Body of pancreas (tissue), 4 donors: ENCODE measurements at regions of chr16 and their contacts with region 1.

Region 1: DNA sequence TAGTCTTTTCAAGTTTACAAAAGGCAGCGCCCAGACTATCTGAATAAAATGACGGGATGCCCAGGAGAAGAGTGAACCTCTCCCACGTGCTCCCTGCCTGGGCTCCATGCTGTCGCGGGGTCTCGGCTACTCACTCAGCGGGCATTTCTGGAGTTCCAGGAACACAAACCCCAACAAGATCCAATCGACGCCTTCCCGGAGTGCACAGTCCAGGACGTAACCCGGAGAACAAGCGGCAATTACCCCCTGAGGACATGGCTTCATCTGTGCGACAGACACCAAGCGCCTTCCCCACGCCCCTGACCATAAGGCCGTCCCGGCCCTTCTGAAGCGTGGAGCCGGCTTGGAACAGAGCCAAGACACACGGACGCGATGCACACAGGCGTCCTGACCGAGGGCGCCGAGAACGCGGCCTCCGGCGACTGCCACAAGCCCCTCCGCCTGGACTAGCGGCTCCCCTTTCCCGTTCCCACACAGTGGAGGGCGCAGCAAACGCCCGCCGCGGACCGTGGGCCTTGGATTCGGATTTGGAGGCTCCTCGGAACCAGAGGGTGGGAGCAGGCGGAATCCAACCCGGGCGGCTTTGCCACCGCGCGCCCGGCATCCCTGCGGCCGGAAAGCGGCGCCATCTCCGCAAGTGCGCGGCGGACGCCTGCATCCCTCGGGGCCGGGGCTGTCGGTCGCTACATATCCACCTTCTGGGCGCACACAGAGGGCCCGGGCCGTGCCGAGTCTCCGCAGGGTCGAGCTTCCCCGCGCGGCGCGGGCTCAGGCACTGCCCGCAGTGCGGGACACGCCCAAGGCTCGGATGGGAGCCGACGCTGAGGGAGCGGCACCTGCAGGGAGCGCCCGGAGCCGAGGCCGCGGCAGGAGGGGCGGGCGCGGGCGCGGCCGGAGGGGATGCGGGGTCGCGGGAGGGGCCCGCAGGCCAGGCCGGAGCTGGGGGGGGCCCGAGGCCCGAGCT is 725 bp downstream of the ABCA3 start:
- DNase-seq: peak; percentile 57 to 74 (median 67)
- ATAC-seq: peak; percentile 47
- H3K4me3 ChIP-seq: peak overlapping the region in 1 of 2 donors; percentile 81
- H3K27ac ChIP-seq: peak overlapping the region in 2 of 4 donors; percentile 39 to 56
- H3K4me1 ChIP-seq: peaks cover 16% of the 10 kb centered on the region
- H3K27me3 ChIP-seq: no peaks in the 10 kb centered on the region
- CTCF ChIP-seq: peak in 3 of 7 experiments; percentile 3 to 17 (median 9)
- POLR2A ChIP-seq: no peak

Region 2: DNA sequence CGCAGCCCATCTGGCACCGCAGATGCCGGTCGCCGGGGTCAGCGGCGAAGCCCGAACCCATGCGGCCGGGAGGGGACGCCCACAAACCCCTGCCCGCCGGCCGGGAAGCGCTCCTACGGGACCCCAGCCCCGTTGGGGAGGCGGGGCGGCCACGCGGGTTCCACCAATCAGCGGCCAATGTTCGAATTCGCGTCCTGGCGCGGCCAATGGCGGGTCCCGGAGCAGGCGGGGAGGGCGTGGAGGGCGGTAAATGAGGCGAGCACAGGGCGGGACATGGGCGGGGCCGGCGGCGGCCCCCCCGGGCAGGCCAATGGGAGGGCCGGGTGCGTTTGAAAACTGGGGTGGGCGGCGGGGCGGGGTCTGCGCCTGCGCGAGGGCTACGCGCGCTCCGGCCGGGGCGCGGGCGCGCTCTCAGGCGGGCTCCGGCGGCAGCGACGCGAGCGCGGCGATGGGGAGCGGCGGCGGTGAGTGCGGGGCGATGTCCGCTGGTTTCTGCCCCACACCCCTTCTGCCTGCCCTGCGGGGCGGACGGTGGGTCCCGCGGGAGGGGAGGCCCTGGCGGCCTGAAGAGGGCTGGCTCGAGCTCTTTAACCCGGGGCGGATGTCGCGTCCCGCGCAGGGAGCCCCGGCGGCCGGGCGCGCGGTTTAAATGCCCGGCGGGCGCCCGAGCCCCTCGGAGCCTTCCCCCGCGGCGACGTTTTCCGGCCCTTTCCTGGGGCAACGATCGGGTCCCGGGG is 89.4 kb after region 1 on chr16 and contains the start of gene CCNF:
- intact Hi-C with region 1: loop called (anchors 5 kb)
- DNase-seq: peak; percentile 98
- ATAC-seq: peak; percentile 98
- H3K4me3 ChIP-seq: peak within 1 kb of the TSS; percentile 45 to 56
- H3K27ac ChIP-seq: peak within 1 kb of the TSS; percentile 37 to 83 (median 62)
- H3K4me1 ChIP-seq: peaks cover 18% of the 10 kb centered on the region
- H3K27me3 ChIP-seq: no peaks in the 10 kb centered on the region
- CTCF ChIP-seq: peak in 4 of 7 experiments; percentile 9 to 49 (median 24)
- POLR2A ChIP-seq: peak in 2 of 3 donors; percentile 55 to 60
- total RNA-seq, gene CCNF: 0.99 to 2.3 TPM